ENCODE measurements at regions of chr17 and their contacts with region 1.

Region 1: DNA sequence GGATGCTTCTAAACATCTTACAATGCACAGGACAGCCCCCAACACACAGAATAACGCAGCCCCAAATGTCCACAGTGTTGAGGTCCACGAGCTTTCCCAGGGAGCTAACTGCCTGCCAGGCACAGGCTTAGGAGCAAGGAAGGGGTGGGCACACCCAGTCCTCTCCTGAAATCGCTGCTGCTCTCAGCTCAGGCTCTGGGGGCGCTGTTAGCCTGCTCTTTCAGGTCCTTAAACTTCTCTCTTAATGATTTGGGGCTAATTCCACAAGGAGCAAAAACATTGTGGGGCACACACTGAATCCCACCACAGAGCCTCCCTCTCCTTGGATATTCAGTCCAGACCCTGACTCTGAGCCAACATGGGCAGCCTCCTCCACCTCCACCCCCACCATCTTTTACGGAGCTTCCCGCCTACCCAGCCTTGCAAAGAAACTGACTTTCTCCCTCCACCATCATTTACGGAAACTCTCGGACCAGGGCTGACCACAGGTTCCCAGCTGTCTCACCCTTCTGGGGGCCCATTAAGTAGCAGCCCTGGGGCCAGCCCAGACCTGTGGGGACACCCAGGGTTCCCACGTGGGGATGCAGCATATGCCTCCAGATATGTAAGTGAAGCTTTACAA is 1.1 kb downstream of the CD300H start:
- DNase-seq: peak; percentile 55
- CTCF ChIP-seq: peak; percentile 58

Region 2: DNA sequence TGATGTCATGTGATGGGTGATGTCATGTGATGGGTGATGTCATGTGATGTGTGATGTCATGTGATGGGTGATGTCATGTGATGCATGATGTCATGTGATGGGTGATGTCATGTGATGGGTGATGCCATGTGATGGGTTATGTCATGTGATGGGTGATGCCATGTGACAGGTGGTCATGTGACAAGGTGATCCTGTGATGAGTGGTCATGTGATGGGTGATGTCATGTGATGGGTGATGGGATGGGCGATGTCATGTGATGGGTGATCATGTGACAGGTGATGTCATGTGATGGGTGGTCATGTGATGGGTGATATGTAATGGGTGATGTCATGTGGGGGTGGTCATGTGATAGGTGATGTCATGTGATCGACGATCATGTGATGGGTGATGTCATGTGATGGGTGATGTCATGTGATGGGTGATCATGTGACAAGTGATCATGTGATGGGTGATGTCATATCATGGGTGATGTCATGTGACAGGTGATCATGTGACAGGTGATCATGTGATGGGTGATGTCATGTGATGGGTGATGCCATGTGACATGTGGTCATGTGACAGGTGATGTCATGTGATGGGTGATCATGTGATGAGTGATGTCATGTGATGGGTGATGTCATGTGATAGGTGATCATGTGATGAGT is 52.1 kb before region 1 on chr17:
- CTCF ChIA-PET with region 1: no interaction called
- POLR2A ChIA-PET with region 1: no interaction called
- DNase-seq: peak; percentile 18
- CTCF ChIP-seq: no peak

Region 3: DNA sequence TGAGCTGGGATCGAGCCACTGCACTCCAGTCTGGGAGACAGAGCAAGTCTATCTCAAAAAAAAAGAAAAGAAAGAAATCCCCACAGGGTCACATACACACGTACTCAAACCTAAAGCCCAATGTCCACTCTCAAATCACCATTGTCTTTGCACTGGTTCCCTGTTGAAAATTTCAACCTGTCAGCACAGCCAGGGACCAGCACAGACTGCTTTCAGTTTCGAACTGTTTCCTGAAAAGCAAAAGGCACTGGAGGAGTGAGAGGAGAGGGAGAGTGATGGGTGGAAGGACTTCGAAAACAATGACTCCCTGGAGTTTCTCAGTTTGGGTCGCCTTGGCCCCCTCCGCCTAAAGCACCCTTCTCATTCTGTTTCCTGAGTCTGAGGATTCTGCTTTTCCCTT is 11.3 kb before region 1 on chr17:
- CTCF ChIA-PET with region 1: interaction called, 27 read pairs
- POLR2A ChIA-PET with region 1: no interaction called
- DNase-seq: no peak
- CTCF ChIP-seq: no peak

Region 4: GRCh38 chr17:74646231-74646630 is 80.0 kb after region 1 on chr17:
- CTCF ChIA-PET with region 1: interaction called, 11 read pairs
- POLR2A ChIA-PET with region 1: no interaction called
- DNase-seq: peak; percentile 66
- CTCF ChIP-seq: peak; percentile 79